ENCODE measurements at regions of chr15 and their contacts with region 1.

Region 1: DNA sequence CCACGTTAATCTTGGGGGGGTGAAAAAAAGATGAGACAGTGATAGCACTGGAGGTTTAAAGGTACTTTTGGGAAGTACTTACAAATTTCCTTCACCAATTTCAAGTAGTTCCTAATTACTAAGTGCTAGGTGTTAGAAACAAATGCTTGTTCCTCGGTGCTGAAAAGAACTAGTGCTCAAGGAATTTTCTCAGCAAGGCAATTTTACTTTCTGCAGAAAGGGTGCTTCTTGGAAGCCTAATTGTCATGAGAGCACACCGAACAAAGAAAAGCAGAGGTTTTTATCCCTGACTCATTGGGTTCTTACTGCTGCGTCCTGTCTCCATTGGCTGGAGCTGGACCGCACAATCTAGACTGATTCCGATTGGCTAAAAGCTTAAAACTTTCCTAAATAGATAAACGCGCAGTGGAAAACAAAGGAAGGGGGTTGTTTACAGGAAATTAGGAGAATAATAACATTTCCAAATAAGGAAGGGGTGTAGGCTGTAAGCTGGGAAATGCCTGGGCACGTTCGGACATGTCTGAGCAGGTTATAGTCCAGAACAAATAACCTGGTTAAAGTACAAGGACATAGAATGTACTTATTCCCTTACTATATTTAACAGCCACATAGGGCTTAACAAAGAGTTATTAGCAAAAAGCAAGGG is 49.6 kb downstream of the CHD2 start:
- DNase-seq: no peak
- H3K4me3 ChIP-seq: no peak overlapping the region
- H3K27ac ChIP-seq: peak overlapping the region in 1 of 3 donors; percentile 68
- H3K4me1 ChIP-seq: peaks cover 8 to 13% of the 10 kb centered on the region in 2 donors
- H3K27me3 ChIP-seq: no peaks in the 10 kb centered on the region
- CTCF ChIP-seq: no peak
- POLR2A ChIP-seq: no peak

Region 2: GRCh38 chr15:92808978-92809879 is 140.5 kb before region 1 on chr15:
- intact Hi-C with region 1: no loop called
- DNase-seq: peak; percentile 98
- H3K4me3 ChIP-seq: peak overlapping the region; percentile 4 to 51 (median 50)
- H3K27ac ChIP-seq: peak overlapping the region; percentile 94 to 99 (median 99)
- H3K4me1 ChIP-seq: peaks cover 32 to 49% of the 10 kb centered on the region in 2 donors
- H3K27me3 ChIP-seq: no peaks in the 10 kb centered on the region
- CTCF ChIP-seq: peak; percentile 61 to 100 (median 98)
- POLR2A ChIP-seq: peak; percentile 74 to 94

Region 3: GRCh38 chr15:93001881-93002280 is 52.2 kb after region 1 on chr15:
- intact Hi-C with region 1: loop called (anchors 10 kb)
- DNase-seq: no peak
- H3K4me3 ChIP-seq: no peak overlapping the region
- H3K27ac ChIP-seq: no peak overlapping the region
- H3K4me1 ChIP-seq: no peaks in the 10 kb centered on the region
- H3K27me3 ChIP-seq: no peaks in the 10 kb centered on the region
- CTCF ChIP-seq: no peak
- POLR2A ChIP-seq: no peak